Activated CD8-positive, alpha-beta T cell treated with anti-CD3 and anti-CD28 coated beads, Interleukin-2, amount 10 ng/mL, durations not matched to agents 7 days and 5 days (primary cell): ENCODE measurements at regions of chr16 and their contacts with region 1.

Region 1: DNA sequence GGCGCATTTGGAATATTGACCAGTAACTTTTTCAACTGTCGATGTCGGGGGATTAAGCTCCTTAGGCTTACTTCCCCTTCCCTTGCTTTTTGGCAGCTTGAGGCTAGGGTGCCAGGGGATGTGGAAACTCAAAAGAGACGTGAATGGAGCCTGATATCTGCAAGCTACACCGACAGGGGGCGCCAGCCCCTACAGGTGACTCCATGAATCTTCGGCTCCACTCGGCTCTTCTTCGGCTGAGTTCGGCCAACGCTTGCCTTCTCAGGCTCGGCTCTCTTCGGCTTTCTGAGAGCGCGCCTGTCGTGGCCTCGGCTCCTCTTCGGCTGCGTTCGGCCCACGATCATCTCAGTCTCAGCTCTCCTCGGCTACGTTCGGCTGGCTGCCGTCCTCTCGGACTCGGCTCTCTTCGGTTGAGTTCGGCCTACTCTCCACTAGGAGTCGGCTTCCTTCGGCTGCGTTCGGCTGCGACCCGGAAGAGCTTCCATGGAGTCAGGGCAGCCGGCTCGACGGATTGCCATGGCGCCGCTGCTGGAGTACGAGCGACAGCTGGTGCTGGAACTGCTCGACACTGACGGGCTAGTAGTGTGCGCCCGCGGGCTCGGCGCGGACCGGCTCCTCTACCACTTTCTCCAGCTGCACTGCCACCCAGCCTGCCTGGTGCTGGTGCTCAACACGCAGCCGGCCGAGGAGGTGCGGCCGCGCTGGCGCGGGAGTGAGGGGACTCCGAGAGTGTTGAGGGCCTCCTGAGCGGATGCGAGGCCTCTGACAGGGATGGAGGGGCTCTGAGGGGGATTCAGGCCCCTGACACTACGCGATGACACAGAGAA is at the start of gene ERCC4:
- DNase-seq: peak; percentile 99
- ATAC-seq: peak; percentile 100
- H3K4me3 Mint-ChIP-seq: peak within 1 kb of the TSS; percentile 98
- H3K27ac Mint-ChIP-seq: peak within 1 kb of the TSS; percentile 96
- H3K4me1 Mint-ChIP-seq: peaks cover 26% of the 10 kb centered on the region
- H3K27me3 Mint-ChIP-seq: peaks cover 5% of the 10 kb centered on the region
- total RNA-seq, gene ERCC4: 8.9 to 12.8 TPM

Region 2: DNA sequence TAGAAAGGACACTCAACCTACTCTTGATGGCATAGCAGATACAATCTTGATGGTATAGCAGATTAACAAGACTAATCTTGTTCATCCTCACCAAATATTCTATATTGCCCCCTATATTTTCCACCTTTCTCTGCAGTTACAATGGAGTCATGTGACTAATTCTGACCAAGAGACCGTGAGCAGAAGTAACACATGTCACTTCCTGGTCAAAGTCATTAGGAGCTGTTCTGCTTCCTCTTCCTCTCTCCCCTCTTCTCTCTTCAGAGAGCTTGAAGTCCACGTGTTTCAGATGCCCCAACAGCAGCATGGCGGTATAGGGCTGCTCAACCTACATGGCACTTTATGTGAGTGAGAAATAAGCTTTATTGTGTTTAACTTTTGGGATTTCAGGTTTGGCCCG is 55.2 kb before region 1 on chr16:
- CTCF ChIA-PET with region 1: interaction called, 10 read pairs
- POLR2A ChIA-PET with region 1: no interaction called
- DNase-seq: no peak
- ATAC-seq: no peak
- H3K4me3 Mint-ChIP-seq: no peak overlapping the region
- H3K27ac Mint-ChIP-seq: no peak overlapping the region
- H3K4me1 Mint-ChIP-seq: no peaks in the 10 kb centered on the region
- H3K27me3 Mint-ChIP-seq: peaks cover 6% of the 10 kb centered on the region

Region 3: GRCh38 chr16:13898233-13898632 is 21.7 kb before region 1 on chr16:
- CTCF ChIA-PET with region 1: interaction called, 26 read pairs
- POLR2A ChIA-PET with region 1: no interaction called
- DNase-seq: no peak
- ATAC-seq: no peak
- H3K4me3 Mint-ChIP-seq: no peak overlapping the region
- H3K27ac Mint-ChIP-seq: no peak overlapping the region
- H3K4me1 Mint-ChIP-seq: no peaks in the 10 kb centered on the region
- H3K27me3 Mint-ChIP-seq: no peaks in the 10 kb centered on the region

Region 4: DNA sequence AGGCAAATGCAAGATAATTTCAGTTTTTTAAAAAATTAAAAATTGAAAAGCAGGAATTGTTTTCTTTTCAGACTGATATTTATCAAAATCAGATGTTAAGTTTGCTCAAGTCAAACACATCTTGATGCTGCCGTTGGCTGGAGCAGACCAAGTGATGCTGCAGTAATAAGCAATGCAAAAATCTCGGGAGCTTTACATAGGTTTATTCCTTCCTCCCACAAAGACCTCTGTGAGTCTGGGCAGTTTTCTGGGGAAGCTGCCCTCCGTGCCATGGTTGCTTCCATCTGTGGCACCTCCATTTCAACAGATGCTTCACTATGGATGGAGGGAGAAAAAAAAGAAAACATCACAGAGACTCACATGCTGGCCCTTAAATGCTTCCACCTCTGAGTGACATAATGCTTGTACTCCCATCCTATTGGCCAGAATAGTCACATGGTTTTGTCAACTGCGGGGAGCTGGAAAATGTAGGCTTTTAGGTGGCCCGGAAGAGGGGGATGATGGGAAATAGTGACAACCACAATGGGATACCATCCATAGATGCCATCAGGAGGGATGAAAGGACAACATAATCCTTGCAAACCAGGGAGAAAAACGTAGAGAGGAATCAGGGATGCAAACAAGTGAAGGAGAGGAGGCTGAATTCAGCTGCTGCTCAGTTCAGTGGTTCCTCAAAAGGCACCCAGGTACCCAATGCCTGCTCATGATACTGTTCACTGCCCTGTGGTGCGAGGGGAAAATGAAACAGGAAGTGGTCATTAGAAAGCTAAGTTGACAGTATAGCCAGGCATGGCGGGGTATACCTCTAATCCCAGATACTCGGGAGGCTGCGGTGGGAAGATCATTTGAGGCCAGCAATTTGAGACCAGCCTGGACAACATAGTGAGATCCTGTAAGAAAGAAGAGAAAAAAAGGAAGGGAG is 13.5 kb before region 1 on chr16:
- CTCF ChIA-PET with region 1: interaction called, 33 read pairs
- POLR2A ChIA-PET with region 1: interaction called, 3 read pairs
- DNase-seq: no peak
- ATAC-seq: no peak
- H3K4me3 Mint-ChIP-seq: no peak overlapping the region
- H3K27ac Mint-ChIP-seq: no peak overlapping the region
- H3K4me1 Mint-ChIP-seq: peaks cover 6% of the 10 kb centered on the region
- H3K27me3 Mint-ChIP-seq: peaks cover 4% of the 10 kb centered on the region

Region 5: GRCh38 chr16:13935408-13935807 is 15.5 kb after region 1 on chr16:
- CTCF ChIA-PET with region 1: interaction called, 39 read pairs
- POLR2A ChIA-PET with region 1: no interaction called
- DNase-seq: no peak
- ATAC-seq: no peak
- H3K4me3 Mint-ChIP-seq: no peak overlapping the region
- H3K27ac Mint-ChIP-seq: no peak overlapping the region
- H3K4me1 Mint-ChIP-seq: peaks cover 10% of the 10 kb centered on the region
- H3K27me3 Mint-ChIP-seq: no peaks in the 10 kb centered on the region

Region 6: DNA sequence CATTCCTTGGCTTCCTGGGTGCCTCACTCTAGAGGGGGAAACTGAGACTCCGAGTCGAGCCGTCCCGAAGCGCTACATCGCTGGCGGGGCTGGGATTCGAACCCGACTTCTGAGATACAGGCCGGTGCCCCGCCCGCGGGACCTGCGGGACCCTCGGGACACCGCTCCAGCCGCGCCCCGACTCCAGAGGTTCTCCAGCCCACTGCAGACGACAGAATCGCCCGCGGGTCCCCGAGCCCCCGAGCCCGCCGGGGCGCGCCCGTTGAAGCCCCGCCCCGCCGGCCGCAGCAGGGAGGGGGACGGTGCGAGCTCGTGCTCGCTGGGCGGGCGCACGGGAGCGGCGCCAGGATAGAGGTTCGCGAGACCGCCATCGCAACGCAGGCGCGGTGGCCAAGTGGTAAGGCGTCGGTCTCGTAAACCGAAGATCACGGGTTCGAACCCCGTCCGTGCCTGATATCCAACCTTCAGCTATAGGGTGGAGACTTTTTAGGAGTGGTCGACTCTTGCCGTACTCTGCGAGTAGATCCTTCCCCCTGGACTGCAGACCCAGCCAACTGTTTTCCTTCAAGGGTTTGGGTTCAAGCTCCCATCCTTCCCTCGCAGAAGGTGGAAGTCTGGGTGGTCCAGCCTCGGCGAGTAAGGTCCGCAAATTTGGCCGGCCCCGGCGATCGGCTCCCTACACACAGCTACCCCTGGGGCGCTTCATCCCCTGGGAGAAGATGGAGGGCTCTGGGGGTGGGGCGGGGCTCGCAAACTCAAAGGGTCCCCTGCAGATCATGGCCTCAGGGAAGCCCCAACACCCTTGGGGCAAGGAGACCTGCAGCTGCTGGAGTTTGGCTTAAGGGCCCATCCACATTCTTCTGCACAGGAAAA is 365.9 kb after region 1 on chr16:
- CTCF ChIA-PET with region 1: interaction called, 26 read pairs
- POLR2A ChIA-PET with region 1: interaction called, 3 read pairs
- DNase-seq: peak; percentile 93
- ATAC-seq: peak; percentile 83
- H3K4me3 Mint-ChIP-seq: peak overlapping the region; percentile 92
- H3K27ac Mint-ChIP-seq: peak overlapping the region; percentile 84
- H3K4me1 Mint-ChIP-seq: peaks cover 16% of the 10 kb centered on the region
- H3K27me3 Mint-ChIP-seq: no peaks in the 10 kb centered on the region